ENCODE measurements at regions of chr7 and their contacts with region 1.

Region 1: GRCh38 chr7:11427686-11428273 is 404.2 kb downstream of the THSD7A start:
- DNase-seq: no peak
- H3K4me3 ChIP-seq: no peak overlapping the region
- H3K27ac ChIP-seq: no peak overlapping the region
- H3K27me3 ChIP-seq: no peaks in the 10 kb centered on the region
- CTCF ChIP-seq: peak; percentile 55 to 88 (median 75)

Region 2: GRCh38 chr7:10325395-10325794 is 1102.4 kb before region 1 on chr7:
- intact Hi-C with region 1: no loop called
- DNase-seq: no peak
- H3K4me3 ChIP-seq: no peak overlapping the region
- H3K27ac ChIP-seq: no peak overlapping the region
- H3K27me3 ChIP-seq: no peaks in the 10 kb centered on the region
- CTCF ChIP-seq: no peak

Region 3: DNA sequence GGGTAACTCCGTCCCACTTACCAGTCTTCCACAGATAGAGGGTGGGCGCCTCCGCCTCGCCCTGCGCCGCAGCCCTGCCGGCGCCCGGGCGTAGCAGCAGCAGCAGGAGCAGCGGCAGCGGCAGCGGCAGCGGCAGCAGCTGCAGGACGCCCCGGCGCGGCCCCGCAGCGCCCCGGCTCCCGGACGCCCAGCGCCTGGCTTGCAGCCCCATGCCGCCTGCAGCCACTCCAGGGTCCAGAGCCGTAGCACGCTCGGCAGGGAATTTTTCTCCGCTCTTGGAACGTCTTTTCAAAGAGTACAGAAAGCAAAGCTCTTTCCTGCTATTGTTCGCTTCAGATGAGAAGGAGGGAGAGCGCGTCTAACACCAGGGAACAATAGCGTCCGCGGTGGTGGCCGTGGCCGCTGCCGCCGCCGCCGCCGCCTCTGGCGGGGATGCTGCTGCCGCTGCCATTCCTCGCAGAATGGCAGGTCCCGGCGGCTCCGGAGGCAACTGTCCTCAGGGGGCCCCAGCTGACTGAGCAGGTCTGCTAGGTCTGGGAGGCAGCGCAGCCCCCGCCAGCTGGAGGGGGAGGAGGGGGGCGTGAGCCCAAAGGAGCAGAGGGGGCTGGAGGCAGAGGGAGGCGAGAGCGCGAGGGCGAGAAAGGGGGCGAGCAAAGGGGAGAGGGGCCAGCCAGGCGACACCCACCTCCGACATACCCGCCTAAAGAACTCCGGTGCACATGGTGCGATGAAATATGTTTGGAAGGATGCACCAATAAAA is 404.1 kb after region 1 on chr7 and contains the start of gene THSD7A:
- intact Hi-C with region 1: loop called in 1 of 2 experiments (anchors 10 kb)
- DNase-seq: peak in 6 of 10 donors; percentile 22 to 74 (median 37)
- H3K4me3 ChIP-seq: peak within 1 kb of the TSS; percentile 43 to 84 (median 68)
- H3K27ac ChIP-seq: peak within 1 kb of the TSS in 52 of 59 donors; percentile 3 to 84 (median 66)
- H3K27me3 ChIP-seq: no peaks in the 10 kb centered on the region
- CTCF ChIP-seq: peak in 16 of 56 donors; percentile 4 to 46 (median 17)
- total RNA-seq, gene THSD7A: 6.6 to 25.9 (median 12.9) TPM

Region 4: DNA sequence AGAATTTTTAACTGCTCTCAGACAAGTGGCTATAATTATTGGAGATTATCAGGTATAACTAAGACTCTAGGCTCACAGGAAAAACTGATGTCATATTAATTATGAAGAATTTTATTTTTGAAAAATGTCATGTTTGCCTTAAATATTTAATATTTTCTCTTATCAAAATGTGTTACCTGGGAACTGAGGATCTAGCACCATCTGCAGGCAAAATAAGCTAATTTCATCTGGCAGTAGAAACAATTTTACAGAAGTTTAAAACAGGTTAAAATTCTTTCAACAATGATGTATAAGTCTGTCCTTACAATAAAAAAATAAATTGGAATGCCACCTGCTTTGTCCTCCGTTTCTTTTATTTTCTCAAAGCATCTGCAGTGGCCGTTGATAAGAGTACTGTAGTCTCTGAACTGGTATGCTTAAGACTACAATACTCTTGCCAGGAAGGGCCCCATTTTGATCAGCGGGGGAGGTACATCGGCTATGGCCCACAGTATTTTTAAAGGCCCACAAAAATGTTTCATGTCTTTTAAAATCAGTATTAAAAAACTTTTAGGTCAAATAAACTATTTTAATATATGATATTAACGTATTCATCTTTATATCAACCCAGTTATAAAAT is 894.6 kb after region 1 on chr7:
- intact Hi-C with region 1: loop called (anchors 5 kb)
- DNase-seq: no peak
- H3K4me3 ChIP-seq: no peak overlapping the region
- H3K27ac ChIP-seq: no peak overlapping the region
- H3K27me3 ChIP-seq: no peaks in the 10 kb centered on the region
- CTCF ChIP-seq: peak; percentile 18 to 86 (median 70)

Measured in dorsolateral prefrontal cortex (tissue), 120 donors.